Right ventricle myocardium inferior (tissue), 1 donor: ENCODE measurements at regions of chr14 and their contacts with region 1.

Region 1: DNA sequence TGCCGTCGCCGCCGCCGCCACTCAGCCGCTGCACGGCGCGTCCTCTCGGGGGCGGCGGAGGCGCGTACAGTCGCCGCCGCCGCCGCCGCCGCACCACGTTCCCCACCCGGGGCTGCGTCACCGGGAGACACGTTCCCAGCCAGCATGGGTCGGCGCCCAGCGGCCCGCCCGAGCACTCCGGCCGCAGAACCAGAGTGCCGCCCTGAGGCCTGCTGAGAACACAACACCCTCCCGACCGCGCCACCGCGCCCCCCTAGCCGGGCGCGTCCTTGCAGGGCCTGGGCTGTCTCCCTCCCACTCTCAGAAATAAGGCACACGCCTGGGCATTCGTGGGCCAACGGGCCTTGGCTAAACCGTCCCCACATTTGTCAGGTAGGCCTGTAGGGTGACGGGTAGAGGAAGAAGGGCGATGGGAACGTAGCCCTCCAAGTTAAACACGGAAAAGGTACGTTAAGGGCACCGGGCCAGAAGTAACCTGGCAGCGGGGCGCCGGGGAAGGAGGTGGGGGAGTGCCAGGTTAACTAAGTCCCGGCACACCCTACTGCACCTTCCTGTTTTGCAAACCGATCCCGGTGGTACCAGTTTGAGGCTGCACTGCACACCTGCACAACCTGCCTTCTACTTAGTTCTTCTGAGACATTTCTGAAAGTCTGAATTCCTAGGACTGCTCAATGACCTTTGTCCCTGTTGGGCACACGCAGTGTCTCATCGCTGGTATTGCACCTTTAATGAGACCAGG is at the start of gene MAP4K5:
- DNase-seq: peak; percentile 96
- ATAC-seq: peak; percentile 100
- total RNA-seq, gene MAP4K5: 14.3 TPM

Region 2: DNA sequence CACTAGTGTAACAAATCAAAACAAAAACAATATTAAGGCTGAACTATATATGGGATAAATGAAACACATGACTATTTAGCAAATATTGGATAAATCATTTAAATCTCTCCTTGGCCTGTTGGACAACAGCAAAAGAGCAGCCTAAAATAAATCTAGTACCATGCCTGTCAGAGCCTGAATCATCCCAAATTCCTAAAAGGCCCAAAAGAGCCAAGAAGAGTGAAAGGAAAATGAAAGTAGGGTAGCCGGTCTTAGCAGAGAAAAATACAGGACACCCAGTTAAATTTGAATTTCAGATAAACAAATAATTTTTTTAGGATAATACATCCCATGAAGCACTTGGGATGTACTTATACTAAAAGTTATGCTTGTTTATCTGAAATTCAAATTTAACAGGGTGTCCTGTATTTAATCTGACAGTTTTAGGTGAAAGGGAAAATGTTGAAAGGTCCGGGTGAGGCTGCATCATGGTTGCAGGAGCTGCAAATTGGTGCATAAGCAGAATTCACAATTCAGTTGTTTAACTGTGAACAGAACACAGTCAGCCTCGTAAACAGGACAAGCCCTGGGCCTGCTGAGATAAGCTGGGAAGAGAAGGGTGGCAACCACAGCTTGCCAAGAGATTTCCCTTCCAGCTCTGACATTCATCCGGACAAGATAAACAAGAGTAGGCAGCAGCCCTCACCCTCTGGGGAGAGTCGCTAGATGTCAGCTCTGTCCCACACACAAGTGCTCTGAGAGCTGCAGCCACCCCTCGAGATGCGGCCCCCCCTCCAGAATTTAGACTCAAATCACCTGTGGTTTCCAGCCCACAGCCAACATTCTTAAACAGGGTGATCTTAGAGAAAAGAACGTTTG is 190.2 kb before region 1 on chr14:
- intact Hi-C with region 1: loop called (anchors 5 kb)
- DNase-seq: no peak
- ATAC-seq: peak; percentile 90